Astrocyte of the cerebellum (primary cell): ENCODE measurements at regions of chr7 and their contacts with region 1.

Region 1: DNA sequence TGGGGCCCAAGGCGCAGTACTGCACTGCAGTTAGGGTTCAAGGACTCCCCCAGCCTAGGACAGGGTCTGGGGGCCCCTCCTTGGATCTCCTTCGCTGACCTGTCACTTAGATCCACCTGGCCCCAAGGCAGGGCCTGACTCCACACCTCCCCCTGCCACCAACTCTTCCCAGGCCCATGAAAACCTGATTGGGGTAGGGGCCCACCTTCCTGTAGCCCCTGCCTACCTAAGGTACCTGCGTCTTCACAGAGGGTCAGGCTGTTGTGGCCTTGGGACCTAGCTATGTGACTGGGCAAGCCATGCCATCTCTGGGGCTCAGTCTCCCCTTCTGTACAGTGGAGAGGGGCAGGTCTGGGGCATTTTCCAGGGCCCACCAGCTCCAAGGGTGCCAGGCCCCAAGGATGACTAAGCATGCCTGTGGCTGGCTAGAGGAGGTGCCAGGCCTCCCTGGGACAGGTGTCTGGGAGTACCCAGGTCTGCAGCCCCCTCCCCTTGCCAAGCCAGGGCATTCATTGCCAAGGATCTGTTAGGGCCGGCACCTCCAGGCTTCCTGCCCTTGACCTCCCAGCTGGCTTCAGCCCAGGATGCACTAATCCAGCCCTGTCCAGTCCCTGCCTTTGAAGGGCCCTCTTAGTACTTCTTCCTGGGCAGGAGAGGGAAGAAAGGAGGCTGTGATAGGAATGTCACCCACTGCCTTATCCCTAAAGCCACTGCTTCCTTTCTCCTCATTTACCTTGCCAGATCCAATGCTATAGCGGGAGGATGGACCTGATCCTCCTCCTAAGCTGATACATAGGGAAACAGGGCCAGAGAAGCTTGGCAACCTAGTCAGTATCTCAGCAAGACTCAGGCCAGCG is 1.3 kb downstream of the LIMK1 start:
- DNase-seq: no peak
- H3K4me3 ChIP-seq: peak overlapping the region; percentile 63
- CTCF ChIP-seq: no peak

Region 2: DNA sequence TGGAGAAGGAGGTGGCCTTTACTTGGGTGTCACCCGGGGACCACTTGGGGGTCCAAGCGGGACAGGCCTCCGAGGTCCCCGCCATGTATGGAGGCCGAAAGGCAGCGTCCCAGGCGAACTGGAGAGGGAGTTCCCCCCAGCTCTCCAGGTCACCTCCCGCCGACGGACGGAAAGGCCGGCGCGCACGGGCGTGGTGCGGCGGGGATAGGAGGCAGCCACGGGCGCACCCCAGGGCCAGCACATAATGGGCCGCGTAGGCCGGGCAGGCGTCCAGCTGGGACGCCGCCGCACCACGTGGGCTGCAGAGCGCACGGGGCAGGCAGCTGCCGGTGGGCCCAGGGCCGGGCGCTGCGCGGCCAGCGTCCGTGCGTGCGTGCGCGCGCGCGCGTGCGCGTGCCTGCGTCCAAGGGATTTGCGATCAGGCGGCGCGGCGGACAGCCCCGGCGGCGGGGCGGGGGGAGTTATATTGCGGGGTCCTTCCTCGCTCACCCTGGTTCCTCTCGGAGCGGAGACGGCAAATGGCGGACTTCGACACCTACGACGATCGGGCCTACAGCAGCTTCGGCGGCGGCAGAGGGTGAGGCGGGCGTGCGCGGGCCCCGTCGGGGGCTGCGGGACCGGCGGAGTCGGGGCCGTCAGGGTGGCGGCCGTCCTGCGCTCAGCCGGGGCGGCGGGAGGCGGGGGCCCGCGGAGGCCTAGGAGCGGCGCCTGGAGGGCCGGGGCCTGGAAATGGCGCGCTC is 89.1 kb after region 1 on chr7 and contains the start of gene EIF4H:
- in situ Hi-C with region 1: loop called (anchors 5 kb)
- DNase-seq: peak; percentile 81
- H3K4me3 ChIP-seq: peak within 1 kb of the TSS; percentile 91
- CTCF ChIP-seq: no peak